T-cell (primary cell): ENCODE measurements at regions of chr9 and their contacts with region 1.

Region 1: DNA sequence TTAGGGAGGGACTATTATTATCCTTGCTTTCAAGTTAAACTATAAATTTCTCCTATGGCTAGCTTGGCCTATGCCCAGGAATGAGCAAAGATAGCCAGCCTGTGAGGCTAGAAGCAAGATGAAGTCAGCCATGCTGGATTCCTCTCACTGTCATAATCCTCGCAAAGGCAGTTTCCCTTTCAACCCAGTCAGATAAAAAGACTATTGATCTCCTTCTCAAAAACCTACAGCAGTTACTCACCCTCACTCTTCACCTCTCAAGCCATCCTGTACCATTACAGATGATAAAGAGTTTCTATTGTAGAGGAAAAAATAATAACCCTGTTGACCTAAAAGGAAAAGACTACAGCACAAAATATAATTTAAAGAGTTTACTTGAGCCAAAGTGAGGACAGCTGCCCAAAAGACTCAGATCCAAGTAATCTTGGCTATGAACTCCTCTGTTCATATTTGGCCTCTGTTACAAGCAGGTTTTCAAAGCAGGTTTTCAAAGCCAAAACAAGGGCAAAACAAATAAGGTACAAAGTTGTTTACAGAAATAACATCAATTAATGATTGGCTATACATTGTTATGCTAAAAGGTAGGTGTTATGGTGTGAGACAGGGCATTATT is 41.7 kb downstream of the KCNV2 start:
- DNase-seq: no peak
- ATAC-seq: no peak
- H3K4me3 ChIP-seq: no peak overlapping the region
- H3K4me3 Mint-ChIP-seq: no peak overlapping the region
- H3K27ac ChIP-seq: no peak overlapping the region
- H3K27ac Mint-ChIP-seq: no peak overlapping the region
- H3K4me1 ChIP-seq: peaks cover 3 to 4% of the 10 kb centered on the region in 2 experiments
- H3K4me1 Mint-ChIP-seq: peaks cover 3 to 7% (median 5%) of the 10 kb centered on the region in 3 donors
- H3K27me3 ChIP-seq: no peaks in the 10 kb centered on the region
- H3K27me3 Mint-ChIP-seq: no peaks in the 10 kb centered on the region

Region 2: DNA sequence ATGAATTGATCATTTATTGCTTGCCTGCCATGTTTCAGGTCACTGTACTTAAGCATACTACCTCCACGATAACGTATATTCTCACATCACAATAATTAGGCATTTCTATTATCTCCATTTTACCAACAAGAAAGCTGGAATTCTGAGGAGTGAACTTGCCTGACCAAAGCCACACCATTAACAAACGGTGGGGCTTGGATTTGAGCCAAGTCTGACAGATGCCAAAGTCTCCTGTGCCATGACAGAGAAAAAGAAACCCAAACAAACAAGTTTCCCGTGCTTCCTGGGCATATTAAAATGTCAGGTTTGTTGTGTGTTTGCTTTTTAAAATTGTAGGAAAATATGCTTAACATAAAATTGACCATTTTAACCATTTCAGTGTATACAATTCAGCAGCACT is 82.5 kb before region 1 on chr9:
- CTCF ChIA-PET with region 1: no interaction called
- POLR2A ChIA-PET with region 1: no interaction called
- DNase-seq: no peak
- ATAC-seq: no peak
- H3K4me3 ChIP-seq: no peak overlapping the region
- H3K4me3 Mint-ChIP-seq: no peak overlapping the region
- H3K27ac ChIP-seq: no peak overlapping the region
- H3K27ac Mint-ChIP-seq: no peak overlapping the region
- H3K4me1 ChIP-seq: no peaks in the 10 kb centered on the region
- H3K4me1 Mint-ChIP-seq: no peaks in the 10 kb centered on the region
- H3K27me3 ChIP-seq: no peaks in the 10 kb centered on the region
- H3K27me3 Mint-ChIP-seq: no peaks in the 10 kb centered on the region

Region 3: DNA sequence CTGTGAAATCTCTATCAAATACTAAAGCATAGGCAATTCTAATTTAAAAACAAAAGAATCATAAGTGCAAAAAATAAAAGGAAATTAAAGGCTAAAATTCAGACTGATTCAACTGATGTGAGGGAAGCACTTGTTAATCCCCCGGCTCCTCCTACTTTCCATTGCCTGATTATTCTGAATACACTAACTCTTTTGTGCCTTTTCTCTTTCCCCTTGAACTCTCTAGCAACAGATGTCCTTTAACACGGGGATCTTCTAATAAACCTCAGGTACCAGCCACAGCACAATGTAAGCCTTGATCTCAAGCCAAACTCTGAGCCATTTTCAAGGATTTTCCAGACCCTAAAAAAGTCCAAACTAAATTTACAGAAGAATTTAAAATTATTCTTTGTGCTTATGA is 19.8 kb after region 1 on chr9:
- CTCF ChIA-PET with region 1: no interaction called
- POLR2A ChIA-PET with region 1: interaction called in 1 of 2 experiments, 14 read pairs
- DNase-seq: no peak
- ATAC-seq: no peak
- H3K4me3 ChIP-seq: no peak overlapping the region
- H3K4me3 Mint-ChIP-seq: no peak overlapping the region
- H3K27ac ChIP-seq: no peak overlapping the region
- H3K27ac Mint-ChIP-seq: no peak overlapping the region
- H3K4me1 ChIP-seq: no peaks in the 10 kb centered on the region
- H3K4me1 Mint-ChIP-seq: no peaks in the 10 kb centered on the region
- H3K27me3 ChIP-seq: no peaks in the 10 kb centered on the region
- H3K27me3 Mint-ChIP-seq: no peaks in the 10 kb centered on the region

Region 4: GRCh38 chr9:3549225-3549624 is 790.2 kb after region 1 on chr9:
- CTCF ChIA-PET with region 1: no interaction called
- POLR2A ChIA-PET with region 1: no interaction called
- DNase-seq: no peak
- ATAC-seq: no peak
- H3K4me3 ChIP-seq: no peak overlapping the region
- H3K4me3 Mint-ChIP-seq: no peak overlapping the region
- H3K27ac ChIP-seq: no peak overlapping the region
- H3K27ac Mint-ChIP-seq: no peak overlapping the region
- H3K4me1 ChIP-seq: no peaks in the 10 kb centered on the region
- H3K4me1 Mint-ChIP-seq: no peaks in the 10 kb centered on the region
- H3K27me3 ChIP-seq: no peaks in the 10 kb centered on the region
- H3K27me3 Mint-ChIP-seq: no peaks in the 10 kb centered on the region